Activated CD8-positive, alpha-beta T cell treated with anti-CD3 and anti-CD28 coated beads, Interleukin-2, amount 10 ng/mL, durations not matched to agents 7 days and 5 days (primary cell): ENCODE measurements at regions of chr3 and their contacts with region 1.

Region 1: DNA sequence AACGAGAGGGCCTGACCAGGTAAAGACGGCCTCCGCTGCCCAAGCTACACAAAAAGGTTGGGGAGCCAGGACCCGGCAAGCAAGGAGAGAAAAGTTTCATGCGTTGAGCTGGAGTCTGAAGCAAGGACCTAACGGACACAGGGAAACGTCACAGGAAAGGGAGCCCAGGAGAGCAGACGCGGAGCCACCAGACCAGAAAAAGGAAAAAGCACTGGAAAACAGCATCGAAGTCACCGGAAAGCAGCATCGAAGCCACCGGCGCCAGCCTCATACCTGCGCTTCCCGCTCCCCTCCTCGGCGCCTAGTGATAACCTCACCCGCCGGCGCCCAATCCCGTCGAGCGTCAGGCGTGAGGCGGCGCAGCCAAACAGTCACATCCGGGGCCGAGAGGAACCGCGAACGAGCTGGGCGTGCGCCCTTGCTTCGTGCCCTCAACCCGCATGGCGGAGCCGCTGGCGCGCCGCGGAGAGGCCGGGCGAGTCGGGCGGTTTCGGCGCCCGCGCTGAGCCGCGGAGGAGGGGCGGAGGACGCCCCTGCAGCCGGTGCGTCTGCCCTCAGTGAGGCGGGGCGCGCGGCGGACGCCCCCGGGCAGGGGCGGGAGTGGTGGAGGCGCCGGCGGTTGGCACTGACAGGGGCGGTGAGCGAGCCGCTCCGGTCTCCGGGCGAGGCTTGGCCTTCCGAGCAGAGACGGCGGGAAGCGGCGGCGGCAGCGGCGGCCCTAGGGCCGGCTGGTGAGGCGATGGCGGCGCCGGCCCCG is at the starts of genes FBXO45 and WDR53:
- DNase-seq: peak; percentile 96
- ATAC-seq: peak; percentile 96
- H3K4me3 Mint-ChIP-seq: peak within 1 kb of the TSS; percentile 96
- H3K27ac Mint-ChIP-seq: peak within 1 kb of the TSS; percentile 97
- H3K4me1 Mint-ChIP-seq: peaks cover 52% of the 10 kb centered on the region
- H3K27me3 Mint-ChIP-seq: no peaks in the 10 kb centered on the region
- total RNA-seq, gene FBXO45: 16.1 to 17.7 TPM
- total RNA-seq, gene WDR53: 21.0 to 21.8 TPM

Region 2: GRCh38 chr3:196528639-196529233 is 39.7 kb before region 1 on chr3:
- CTCF ChIA-PET with region 1: interaction called, 22 read pairs
- POLR2A ChIA-PET with region 1: interaction called, 6 read pairs
- DNase-seq: peak; percentile 84
- ATAC-seq: peak; percentile 100
- H3K4me3 Mint-ChIP-seq: peak overlapping the region; percentile 62
- H3K27ac Mint-ChIP-seq: peak overlapping the region; percentile 25
- H3K4me1 Mint-ChIP-seq: peaks cover 11% of the 10 kb centered on the region
- H3K27me3 Mint-ChIP-seq: peaks cover 13% of the 10 kb centered on the region

Region 3: GRCh38 chr3:196711838-196712513 is 143.6 kb after region 1 on chr3 and contains the starts of genes CEP19 and PIGX:
- CTCF ChIA-PET with region 1: no interaction called
- POLR2A ChIA-PET with region 1: interaction called, 11 read pairs
- DNase-seq: peak; percentile 91
- ATAC-seq: peak; percentile 87
- H3K4me3 Mint-ChIP-seq: peak within 1 kb of the TSS; percentile 86
- H3K27ac Mint-ChIP-seq: peak within 1 kb of the TSS; percentile 91
- H3K4me1 Mint-ChIP-seq: peaks cover 37% of the 10 kb centered on the region
- H3K27me3 Mint-ChIP-seq: no peaks in the 10 kb centered on the region
- total RNA-seq, gene CEP19: 4.6 to 5.6 TPM
- total RNA-seq, gene PIGX: 41.5 to 42.1 TPM

Region 4: GRCh38 chr3:196739671-196740480 is 171.5 kb after region 1 on chr3 and contains the start of gene PAK2:
- CTCF ChIA-PET with region 1: no interaction called
- POLR2A ChIA-PET with region 1: interaction called, 12 read pairs
- DNase-seq: peak; percentile 92
- ATAC-seq: peak; percentile 92
- H3K4me3 Mint-ChIP-seq: peak within 1 kb of the TSS; percentile 96
- H3K27ac Mint-ChIP-seq: peak within 1 kb of the TSS; percentile 97
- H3K4me1 Mint-ChIP-seq: peaks cover 22% of the 10 kb centered on the region
- H3K27me3 Mint-ChIP-seq: no peaks in the 10 kb centered on the region
- total RNA-seq, gene PAK2: 84.7 to 104 TPM